CD8-positive, alpha-beta memory T cell (primary cell): ENCODE measurements at regions of chr20 and their contacts with region 1.

Region 1: GRCh38 chr20:49323622-49324238 is 45.9 kb upstream of the ZNFX1 start:
- DNase-seq: peak in 2 of 5 donors; percentile 47 to 48
- H3K4me3 ChIP-seq: no peak overlapping the region
- H3K4me3 Mint-ChIP-seq: peak overlapping the region in 4 of 7 donors; percentile 45 to 52 (median 48)
- H3K27ac ChIP-seq: no peak overlapping the region
- H3K27ac Mint-ChIP-seq: peak overlapping the region in 7 of 8 donors; percentile 24 to 90 (median 81)
- H3K4me1 ChIP-seq: peaks cover 16% of the 10 kb centered on the region
- H3K4me1 Mint-ChIP-seq: peaks cover 25 to 30% (median 29%) of the 10 kb centered on the region in 3 donors
- H3K27me3 ChIP-seq: peaks cover 12% of the 10 kb centered on the region
- H3K27me3 Mint-ChIP-seq: peaks cover 26 to 27% of the 10 kb centered on the region in 2 donors

Region 2: DNA sequence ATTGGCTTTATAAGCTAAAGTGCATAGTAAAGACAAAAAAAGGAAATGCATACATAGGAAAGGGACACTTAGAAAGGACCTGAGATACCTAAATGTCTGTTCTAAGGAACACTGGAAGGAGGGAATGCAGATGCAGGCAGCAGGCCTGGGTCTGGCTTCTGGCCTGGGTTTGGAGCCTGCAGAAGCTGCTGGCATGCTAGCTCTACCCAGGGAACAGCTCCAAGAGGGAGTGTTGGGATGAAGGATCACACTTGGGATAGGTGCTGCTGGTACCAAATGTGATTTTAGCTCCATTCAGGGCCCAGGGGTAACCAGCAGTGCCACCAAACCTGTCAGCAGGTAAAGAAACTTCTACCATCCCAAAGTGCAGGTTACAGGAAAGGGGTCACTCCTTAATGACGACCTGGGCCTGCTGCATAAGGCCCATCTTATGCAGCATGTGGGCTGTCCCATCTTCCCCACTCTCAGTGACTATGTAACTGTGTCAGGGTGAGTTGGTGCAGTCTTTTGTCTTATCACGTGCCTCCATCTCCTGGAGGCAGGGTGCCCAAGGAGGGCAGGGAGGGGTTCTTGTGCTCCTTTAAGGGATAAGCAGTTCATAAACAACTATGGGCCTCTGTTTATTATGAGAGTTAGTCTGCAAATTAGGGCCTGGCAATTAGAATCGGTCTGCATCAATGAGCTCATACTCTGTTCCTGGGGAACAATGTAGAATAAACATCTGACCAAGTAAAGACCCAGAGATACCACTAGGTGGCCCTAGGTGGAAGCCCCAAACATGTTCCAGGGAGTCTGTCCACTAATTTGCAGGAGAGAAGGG is 77.6 kb before region 1 on chr20:
- CTCF ChIA-PET with region 1: interaction called, 11 read pairs
- POLR2A ChIA-PET with region 1: no interaction called
- DNase-seq: peak in 2 of 5 donors; percentile 13 to 33
- H3K4me3 ChIP-seq: no peak overlapping the region
- H3K4me3 Mint-ChIP-seq: no peak overlapping the region
- H3K27ac ChIP-seq: no peak overlapping the region
- H3K27ac Mint-ChIP-seq: peak overlapping the region in 6 of 8 donors; percentile 3 to 76 (median 35)
- H3K4me1 ChIP-seq: no peaks in the 10 kb centered on the region
- H3K4me1 Mint-ChIP-seq: peaks cover 0 to 7% (median 5%) of the 10 kb centered on the region in 3 donors
- H3K27me3 ChIP-seq: no peaks in the 10 kb centered on the region
- H3K27me3 Mint-ChIP-seq: no peaks in the 10 kb centered on the region

Region 3: DNA sequence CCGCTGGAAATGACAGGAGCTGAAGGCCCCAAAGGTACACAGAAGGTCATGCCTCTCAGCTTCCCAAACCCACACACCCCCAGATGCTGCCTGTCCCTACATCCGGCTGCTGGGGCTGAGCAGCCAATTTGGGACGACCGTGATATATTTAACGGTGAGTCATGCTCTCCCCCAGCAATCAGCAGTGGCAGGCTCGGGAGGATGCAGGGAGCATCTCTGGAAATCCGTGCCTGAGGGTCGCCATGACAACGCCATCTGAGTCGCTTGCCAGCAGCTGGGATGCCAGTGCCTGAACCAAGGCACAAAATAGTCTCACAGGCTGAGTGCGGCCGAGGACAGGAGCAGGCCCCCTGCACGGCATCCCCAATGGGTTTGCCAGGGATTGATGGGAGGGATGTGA is 100.8 kb after region 1 on chr20:
- CTCF ChIA-PET with region 1: no interaction called
- POLR2A ChIA-PET with region 1: no interaction called
- DNase-seq: no peak
- H3K4me3 ChIP-seq: no peak overlapping the region
- H3K4me3 Mint-ChIP-seq: no peak overlapping the region
- H3K27ac ChIP-seq: no peak overlapping the region
- H3K27ac Mint-ChIP-seq: no peak overlapping the region
- H3K4me1 ChIP-seq: no peaks in the 10 kb centered on the region
- H3K4me1 Mint-ChIP-seq: no peaks in the 10 kb centered on the region
- H3K27me3 ChIP-seq: no peaks in the 10 kb centered on the region
- H3K27me3 Mint-ChIP-seq: peaks cover 9 to 20% of the 10 kb centered on the region in 2 donors